CD8-positive, alpha-beta T cell (primary cell): ENCODE measurements at regions of chr20 and their contacts with region 1.

Region 1: DNA sequence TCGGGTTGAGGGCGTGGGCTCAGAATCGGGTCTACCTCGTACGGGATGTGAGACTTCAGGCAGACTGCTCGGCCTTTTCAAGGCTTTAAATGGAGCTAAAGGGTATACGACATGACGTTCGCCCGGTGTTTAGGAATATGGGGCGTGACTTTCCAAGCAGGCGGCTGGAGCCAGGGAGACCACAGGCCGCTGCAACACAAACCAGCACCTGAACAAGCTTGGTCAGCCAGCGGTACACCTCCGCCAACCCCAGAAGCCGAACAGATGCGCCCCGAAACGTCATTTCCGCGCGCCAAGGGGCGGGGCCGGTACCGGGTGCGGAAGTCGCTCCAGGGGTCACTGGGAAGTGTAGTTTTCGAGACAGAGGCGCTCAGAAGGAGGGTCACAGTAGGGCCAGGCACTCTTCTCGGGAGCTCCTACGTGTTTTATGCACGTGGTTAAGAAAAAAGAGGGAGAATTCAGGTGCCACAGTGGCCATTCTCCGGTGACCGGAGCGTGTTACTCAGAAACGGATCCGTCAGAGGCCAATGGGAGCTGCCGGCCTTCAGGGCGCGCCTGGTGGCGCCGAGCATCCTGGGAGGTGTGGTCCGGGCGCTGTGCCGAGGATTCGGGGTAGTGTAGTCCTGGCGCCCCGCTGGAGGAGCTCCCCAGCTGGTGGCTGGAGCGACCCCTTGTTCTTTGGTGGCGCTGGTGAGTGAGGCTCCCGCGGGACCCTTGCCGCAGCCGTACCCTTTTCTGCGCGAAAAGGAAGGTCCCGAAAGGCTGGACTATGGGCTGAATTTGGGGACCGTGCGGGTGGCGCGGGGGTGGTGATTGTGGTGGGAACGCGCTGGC is at the start of gene ZNF133:
- DNase-seq: peak; percentile 94 to 100 (median 96)
- ATAC-seq: peak; percentile 91
- H3K4me3 ChIP-seq: peak within 1 kb of the TSS; percentile 74 to 95
- H3K4me3 Mint-ChIP-seq: peak within 1 kb of the TSS; percentile 96
- H3K27ac ChIP-seq: peak within 1 kb of the TSS; percentile 94 to 96
- H3K27ac Mint-ChIP-seq: peak within 1 kb of the TSS; percentile 99
- H3K4me1 ChIP-seq: peaks cover 16% of the 10 kb centered on the region
- H3K4me1 Mint-ChIP-seq: peaks cover 37% of the 10 kb centered on the region
- H3K27me3 ChIP-seq: peaks cover 0 to 2% of the 10 kb centered on the region in 2 experiments
- H3K27me3 Mint-ChIP-seq: peaks cover 14% of the 10 kb centered on the region
- CTCF ChIP-seq: no peak
- total RNA-seq, gene ZNF133: 2.2 to 2.7 TPM

Region 2: DNA sequence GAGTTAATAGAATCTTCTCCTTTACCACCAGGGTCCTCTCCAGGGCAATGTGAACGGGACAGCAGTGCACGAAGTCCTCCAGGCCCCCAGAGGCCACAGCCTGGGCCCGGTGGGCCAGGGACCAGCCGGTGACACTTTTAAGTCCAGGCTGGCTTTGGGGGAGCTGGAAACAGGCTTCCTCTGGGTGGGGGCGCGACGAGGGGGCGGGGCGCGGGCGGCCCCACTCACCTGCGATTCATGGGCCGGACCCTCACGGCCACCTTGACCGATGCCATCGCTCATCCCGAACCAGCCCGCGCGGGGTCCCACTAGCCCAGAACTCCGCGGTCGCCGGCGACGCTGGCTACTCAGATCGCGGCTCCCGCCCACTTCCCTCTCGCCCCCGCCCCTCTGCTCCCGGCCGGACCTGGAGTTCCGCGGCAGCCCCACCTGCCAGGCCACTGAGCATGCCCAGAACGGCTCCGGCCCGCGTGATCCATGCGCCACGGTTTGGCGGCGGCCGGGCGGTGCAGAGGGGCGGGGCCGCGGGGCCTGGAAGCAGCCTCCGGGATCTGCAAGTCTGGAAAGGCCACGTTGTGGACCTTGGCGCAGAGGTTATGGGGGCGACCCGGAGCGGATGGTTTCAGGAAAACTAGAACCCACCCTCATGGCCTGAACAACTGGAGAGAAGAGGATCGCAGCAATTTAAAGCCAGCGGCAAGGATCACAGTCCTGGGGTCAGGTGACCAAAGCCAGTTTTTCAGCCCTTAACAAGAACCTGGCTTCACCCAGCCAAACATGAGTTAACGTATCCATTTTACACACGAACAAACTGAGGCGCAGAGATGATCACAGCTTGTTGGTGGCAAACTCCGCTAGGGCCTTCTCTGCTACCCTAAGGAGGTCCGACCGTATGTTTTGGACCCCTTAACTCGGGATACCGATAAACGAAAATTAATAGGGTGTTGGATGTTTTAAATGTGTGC is 1714.8 kb before region 1 on chr20 and contains the start of gene KIF16B:
- CTCF ChIA-PET with region 1: no interaction called
- POLR2A ChIA-PET with region 1: no interaction called
- intact Hi-C with region 1: loop called in 1 of 2 experiments (anchors 5 kb)
- DNase-seq: peak; percentile 35 to 88 (median 79)
- ATAC-seq: peak; percentile 79
- H3K4me3 ChIP-seq: peak within 1 kb of the TSS; percentile 60 to 88
- H3K4me3 Mint-ChIP-seq: peak within 1 kb of the TSS; percentile 88
- H3K27ac ChIP-seq: peak within 1 kb of the TSS; percentile 26 to 33
- H3K27ac Mint-ChIP-seq: peak within 1 kb of the TSS; percentile 53
- H3K4me1 ChIP-seq: peaks cover 19% of the 10 kb centered on the region
- H3K4me1 Mint-ChIP-seq: peaks cover 43% of the 10 kb centered on the region
- H3K27me3 ChIP-seq: no peaks in the 10 kb centered on the region
- H3K27me3 Mint-ChIP-seq: peaks cover 4% of the 10 kb centered on the region
- CTCF ChIP-seq: no peak
- total RNA-seq, gene KIF16B: 4.7 to 4.9 TPM

Region 3: GRCh38 chr20:17569616-17570346 is 718.4 kb before region 1 on chr20 and contains the start of gene DSTN:
- CTCF ChIA-PET with region 1: no interaction called
- POLR2A ChIA-PET with region 1: interaction called, 4 read pairs
- intact Hi-C with region 1: loop called in 1 of 2 experiments (anchors 1 kb)
- DNase-seq: peak; percentile 76 to 94 (median 86)
- ATAC-seq: peak; percentile 88
- H3K4me3 ChIP-seq: peak within 1 kb of the TSS; percentile 80 to 92
- H3K4me3 Mint-ChIP-seq: peak within 1 kb of the TSS; percentile 85
- H3K27ac ChIP-seq: peak within 1 kb of the TSS; percentile 73 to 81
- H3K27ac Mint-ChIP-seq: peak within 1 kb of the TSS; percentile 91
- H3K4me1 ChIP-seq: peaks cover 24% of the 10 kb centered on the region
- H3K4me1 Mint-ChIP-seq: peaks cover 28% of the 10 kb centered on the region
- H3K27me3 ChIP-seq: no peaks in the 10 kb centered on the region
- H3K27me3 Mint-ChIP-seq: no peaks in the 10 kb centered on the region
- CTCF ChIP-seq: no peak
- total RNA-seq, gene DSTN: 40.5 to 42.9 TPM

Region 4: DNA sequence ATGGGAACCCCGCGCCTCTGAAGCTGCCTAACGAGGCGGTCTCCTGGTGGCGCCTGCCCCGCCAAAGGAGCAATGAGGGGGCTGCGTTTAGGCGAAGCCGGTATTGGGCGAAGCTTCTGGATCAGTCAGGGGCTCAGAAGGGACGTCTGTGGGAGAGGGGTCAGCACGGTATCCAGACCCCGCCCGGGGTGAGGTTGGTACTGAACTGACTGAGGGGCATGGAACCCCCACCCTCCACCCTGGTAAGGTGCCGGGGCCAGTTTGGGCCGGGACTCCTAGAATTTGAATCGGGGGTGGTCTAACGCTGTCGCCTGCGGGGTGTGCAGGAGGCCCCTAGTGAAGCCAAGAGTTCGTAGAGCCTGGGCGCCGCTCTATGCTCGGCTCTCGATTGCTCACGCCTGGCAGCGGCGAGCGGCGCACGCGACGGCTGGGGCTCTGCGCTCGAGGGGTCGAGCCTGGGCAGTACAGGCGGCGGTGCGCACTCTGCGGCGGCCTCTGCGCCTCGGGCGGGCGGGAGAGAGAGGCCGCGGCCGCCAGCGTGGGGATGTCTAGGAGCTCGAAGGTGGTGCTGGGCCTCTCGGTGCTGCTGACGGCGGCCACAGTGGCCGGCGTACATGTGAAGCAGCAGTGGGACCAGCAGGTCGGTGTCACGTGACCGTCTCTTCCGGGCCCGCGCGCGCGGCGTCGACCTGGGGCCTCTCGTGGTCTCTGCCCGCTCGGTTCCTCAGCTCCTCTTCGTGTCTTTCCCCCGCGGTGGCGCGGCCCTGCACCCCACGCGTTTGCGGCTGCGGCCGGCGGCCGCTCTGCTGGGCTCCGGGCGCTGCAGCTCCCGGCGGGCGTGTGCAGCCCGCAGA is 150.5 kb before region 1 on chr20 and contains the starts of genes KAT14 and PET117:
- CTCF ChIA-PET with region 1: no interaction called
- POLR2A ChIA-PET with region 1: interaction called, 13 read pairs
- intact Hi-C with region 1: loop called (anchors 1 kb)
- DNase-seq: peak; percentile 84 to 97 (median 90)
- ATAC-seq: peak; percentile 91
- H3K4me3 ChIP-seq: peak within 1 kb of the TSS; percentile 89 to 98
- H3K4me3 Mint-ChIP-seq: peak within 1 kb of the TSS; percentile 88
- H3K27ac ChIP-seq: peak within 1 kb of the TSS; percentile 84 to 91
- H3K27ac Mint-ChIP-seq: peak within 1 kb of the TSS; percentile 91
- H3K4me1 ChIP-seq: peaks cover 19% of the 10 kb centered on the region
- H3K4me1 Mint-ChIP-seq: peaks cover 36% of the 10 kb centered on the region
- H3K27me3 ChIP-seq: no peaks in the 10 kb centered on the region
- H3K27me3 Mint-ChIP-seq: no peaks in the 10 kb centered on the region
- CTCF ChIP-seq: no peak
- total RNA-seq, gene KAT14: 7.8 to 8.4 TPM
- total RNA-seq, gene PET117: 15.3 to 17.3 TPM

Region 5: DNA sequence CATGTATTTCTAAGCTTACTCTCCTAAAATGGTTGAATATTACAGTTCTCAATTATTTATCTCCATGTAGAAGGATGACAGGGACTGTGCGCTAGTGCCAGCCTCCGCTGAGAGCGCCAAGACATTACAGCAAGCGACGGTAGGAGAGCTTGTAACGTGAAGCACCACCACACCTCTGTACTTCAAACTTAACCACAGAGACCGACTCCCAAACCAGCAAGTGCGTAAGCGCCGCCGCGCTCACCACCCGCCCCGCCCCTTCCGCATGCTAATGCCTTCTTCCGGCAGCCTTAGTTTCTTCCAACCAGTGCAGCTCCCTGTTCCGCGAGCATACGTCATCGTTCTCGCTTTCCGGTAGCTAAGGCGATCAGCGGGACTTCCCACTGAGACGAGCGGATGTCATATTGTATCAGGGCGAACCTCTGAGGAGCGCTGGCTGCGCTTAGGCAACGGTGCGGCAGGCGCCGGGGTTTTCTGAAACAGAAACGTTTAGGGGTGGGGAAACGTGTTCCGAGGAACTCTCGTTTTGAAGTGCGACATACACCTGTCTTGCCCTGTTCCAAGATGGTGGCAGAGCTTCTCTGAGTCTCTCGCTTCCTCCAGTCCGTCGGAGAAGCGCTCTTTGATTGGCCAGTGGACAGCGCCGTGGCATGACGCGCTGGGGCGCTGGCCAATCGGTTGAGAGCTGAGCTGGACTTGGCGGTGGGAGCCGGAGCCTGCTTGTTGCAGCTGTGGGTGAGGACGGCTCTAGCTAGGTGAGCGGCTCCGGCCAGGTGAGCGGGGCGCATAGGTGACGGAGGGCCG is 219.3 kb after region 1 on chr20 and contains the start of gene SEC23B:
- CTCF ChIA-PET with region 1: no interaction called
- POLR2A ChIA-PET with region 1: interaction called, 15 read pairs
- intact Hi-C with region 1: loop called (anchors 1 kb)
- DNase-seq: peak; percentile 96 to 100 (median 98)
- ATAC-seq: peak; percentile 82
- H3K4me3 ChIP-seq: peak within 1 kb of the TSS; percentile 63 to 87
- H3K4me3 Mint-ChIP-seq: peak within 1 kb of the TSS; percentile 100
- H3K27ac ChIP-seq: peak within 1 kb of the TSS; percentile 97 to 100
- H3K27ac Mint-ChIP-seq: peak within 1 kb of the TSS; percentile 100
- H3K4me1 ChIP-seq: peaks cover 17% of the 10 kb centered on the region
- H3K4me1 Mint-ChIP-seq: peaks cover 47% of the 10 kb centered on the region
- H3K27me3 ChIP-seq: no peaks in the 10 kb centered on the region
- H3K27me3 Mint-ChIP-seq: no peaks in the 10 kb centered on the region
- CTCF ChIP-seq: no peak
- total RNA-seq, gene SEC23B: 31.5 to 31.8 TPM

Region 6: DNA sequence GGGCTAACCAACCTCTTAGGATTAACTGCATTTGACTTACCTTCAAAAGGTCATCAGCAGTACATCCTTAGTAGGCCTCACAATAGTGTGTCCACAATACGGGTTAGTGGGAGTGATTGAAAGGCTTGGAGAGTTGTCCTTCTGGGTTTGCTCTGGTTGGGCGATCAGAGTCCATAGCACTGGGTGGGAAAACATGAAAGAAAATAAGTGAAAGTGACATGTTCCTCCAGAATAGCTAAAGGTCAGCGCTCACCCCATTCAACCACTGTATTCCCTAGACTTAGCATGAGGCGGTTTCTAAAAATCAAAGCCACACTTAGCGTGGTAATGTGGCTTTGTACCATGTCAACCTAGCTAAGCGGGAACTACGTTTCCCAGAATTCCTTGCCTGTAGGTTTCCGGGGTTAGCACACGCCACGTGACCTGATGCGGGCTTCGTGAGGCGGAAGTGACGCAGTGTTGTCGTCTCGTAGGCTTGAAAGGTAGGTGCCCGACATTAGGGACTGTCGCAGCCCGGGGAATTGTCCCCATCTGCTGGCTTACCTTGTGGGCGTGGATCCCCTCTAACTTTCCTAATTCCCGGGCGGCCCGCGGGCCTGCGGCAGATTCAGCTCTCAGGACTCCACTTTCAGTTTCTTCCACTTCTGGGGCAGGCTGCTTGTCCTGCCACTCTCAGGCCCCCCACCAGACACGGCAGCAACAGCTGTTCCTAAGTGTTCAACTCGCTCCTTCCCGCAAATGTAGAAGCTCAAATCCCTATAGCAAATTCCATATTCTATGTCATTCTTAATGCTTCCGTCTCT is 505.7 kb after region 1 on chr20:
- CTCF ChIA-PET with region 1: no interaction called
- POLR2A ChIA-PET with region 1: interaction called, 9 read pairs
- intact Hi-C with region 1: loop called (anchors 1 kb)
- DNase-seq: peak; percentile 78 to 98 (median 88)
- ATAC-seq: peak; percentile 93
- H3K4me3 ChIP-seq: peak overlapping the region; percentile 73 to 79
- H3K4me3 Mint-ChIP-seq: peak overlapping the region; percentile 96
- H3K27ac ChIP-seq: peak overlapping the region; percentile 94 to 95
- H3K27ac Mint-ChIP-seq: peak overlapping the region; percentile 100
- H3K4me1 ChIP-seq: peaks cover 12% of the 10 kb centered on the region
- H3K4me1 Mint-ChIP-seq: peaks cover 17% of the 10 kb centered on the region
- H3K27me3 ChIP-seq: no peaks in the 10 kb centered on the region
- H3K27me3 Mint-ChIP-seq: peaks cover 19% of the 10 kb centered on the region
- CTCF ChIP-seq: no peak